ENCODE measurements at regions of chr16 and their contacts with region 1.

Region 1: GRCh38 chr16:30984669-30985400 is at the start of gene HSD3B7:
- DNase-seq: peak; percentile 24
- H3K4me3 ChIP-seq: peak within 1 kb of the TSS; percentile 31 to 68 (median 56)
- H3K27ac ChIP-seq: peak within 1 kb of the TSS; percentile 62 to 83 (median 78)
- H3K4me1 ChIP-seq: peaks cover 7 to 23% (median 8%) of the 10 kb centered on the region in 3 donors
- H3K27me3 ChIP-seq: no peaks in the 10 kb centered on the region
- CTCF ChIP-seq: peak; percentile 92 to 97 (median 96)
- POLR2A ChIP-seq: no peak
- total RNA-seq, gene HSD3B7: 6.9 to 17.0 (median 8.8) TPM

Region 2: GRCh38 chr16:30775392-30776188 is 209.2 kb before region 1 on chr16:
- intact Hi-C with region 1: no loop called
- DNase-seq: no peak
- H3K4me3 ChIP-seq: peak overlapping the region; percentile 71 to 81 (median 76)
- H3K27ac ChIP-seq: peak overlapping the region; percentile 84 to 89 (median 84)
- H3K4me1 ChIP-seq: peaks cover 14 to 47% (median 23%) of the 10 kb centered on the region in 3 donors
- H3K27me3 ChIP-seq: no peaks in the 10 kb centered on the region
- CTCF ChIP-seq: no peak
- POLR2A ChIP-seq: peak in 1 of 4 donors; percentile 39

Region 3: GRCh38 chr16:30858829-30859423 is 125.9 kb before region 1 on chr16:
- intact Hi-C with region 1: no loop called
- DNase-seq: no peak
- H3K4me3 ChIP-seq: no peak overlapping the region
- H3K27ac ChIP-seq: no peak overlapping the region
- H3K4me1 ChIP-seq: peaks cover 0 to 8% (median 0%) of the 10 kb centered on the region in 3 donors
- H3K27me3 ChIP-seq: no peaks in the 10 kb centered on the region
- CTCF ChIP-seq: no peak
- POLR2A ChIP-seq: no peak

Region 4: DNA sequence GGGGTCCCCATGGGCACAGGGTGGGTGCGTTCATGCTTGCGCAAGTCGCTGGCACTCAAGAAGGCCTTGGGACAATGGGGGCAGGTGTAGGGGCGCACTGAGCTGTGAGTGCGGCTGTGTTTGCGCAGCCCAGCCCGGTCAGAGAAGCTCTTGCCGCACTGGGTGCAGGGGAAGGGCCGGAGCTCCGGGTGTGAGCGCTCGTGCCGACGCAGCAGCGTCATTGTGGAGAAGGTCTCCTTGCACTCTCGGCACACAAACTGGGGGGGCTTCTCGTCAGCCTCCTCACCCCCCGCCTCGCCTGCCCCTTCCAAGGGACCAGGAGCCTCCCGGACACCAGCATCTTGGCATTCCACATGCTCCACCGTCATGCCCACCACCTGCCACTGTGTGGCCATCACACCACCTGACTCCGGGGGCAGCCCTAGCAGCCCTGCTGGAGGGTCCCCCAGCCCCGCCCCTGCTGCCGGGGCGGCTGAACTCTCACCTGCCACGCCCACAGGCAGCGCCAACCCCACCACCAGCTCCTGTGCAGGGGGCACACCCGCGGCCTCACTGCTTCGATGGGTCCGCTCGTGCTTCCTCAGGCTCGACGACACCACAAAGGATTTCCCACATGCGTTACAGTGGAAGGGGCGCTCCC is 76.4 kb after region 1 on chr16:
- intact Hi-C with region 1: no loop called
- DNase-seq: no peak
- H3K4me3 ChIP-seq: no peak overlapping the region
- H3K27ac ChIP-seq: no peak overlapping the region
- H3K4me1 ChIP-seq: peaks cover 4 to 24% (median 13%) of the 10 kb centered on the region in 3 donors
- H3K27me3 ChIP-seq: no peaks in the 10 kb centered on the region
- CTCF ChIP-seq: no peak
- POLR2A ChIP-seq: no peak

Region 5: DNA sequence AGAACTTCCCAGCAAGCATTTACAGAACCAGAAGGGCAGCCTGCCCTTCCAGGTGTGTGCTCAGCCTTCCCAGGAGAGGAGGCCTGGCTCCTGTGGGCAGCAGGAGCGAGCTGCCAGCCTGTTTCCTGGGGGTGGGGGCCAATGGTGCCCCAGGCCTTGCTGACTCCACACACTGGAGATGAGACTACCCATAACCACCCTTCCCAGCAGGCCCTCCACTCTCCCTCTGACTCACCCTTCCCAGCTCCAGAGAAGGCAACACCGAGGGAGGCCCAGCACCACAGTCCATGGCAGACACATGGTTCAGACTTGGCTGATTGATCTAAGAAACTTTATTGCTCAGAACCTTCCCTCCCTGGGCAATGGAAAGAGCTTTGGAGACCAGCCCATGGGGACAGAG is 105.7 kb after region 1 on chr16:
- intact Hi-C with region 1: no loop called
- DNase-seq: no peak
- H3K4me3 ChIP-seq: no peak overlapping the region
- H3K27ac ChIP-seq: no peak overlapping the region
- H3K4me1 ChIP-seq: peaks cover 10 to 26% (median 11%) of the 10 kb centered on the region in 3 donors
- H3K27me3 ChIP-seq: no peaks in the 10 kb centered on the region
- CTCF ChIP-seq: no peak
- POLR2A ChIP-seq: no peak

Region 6: DNA sequence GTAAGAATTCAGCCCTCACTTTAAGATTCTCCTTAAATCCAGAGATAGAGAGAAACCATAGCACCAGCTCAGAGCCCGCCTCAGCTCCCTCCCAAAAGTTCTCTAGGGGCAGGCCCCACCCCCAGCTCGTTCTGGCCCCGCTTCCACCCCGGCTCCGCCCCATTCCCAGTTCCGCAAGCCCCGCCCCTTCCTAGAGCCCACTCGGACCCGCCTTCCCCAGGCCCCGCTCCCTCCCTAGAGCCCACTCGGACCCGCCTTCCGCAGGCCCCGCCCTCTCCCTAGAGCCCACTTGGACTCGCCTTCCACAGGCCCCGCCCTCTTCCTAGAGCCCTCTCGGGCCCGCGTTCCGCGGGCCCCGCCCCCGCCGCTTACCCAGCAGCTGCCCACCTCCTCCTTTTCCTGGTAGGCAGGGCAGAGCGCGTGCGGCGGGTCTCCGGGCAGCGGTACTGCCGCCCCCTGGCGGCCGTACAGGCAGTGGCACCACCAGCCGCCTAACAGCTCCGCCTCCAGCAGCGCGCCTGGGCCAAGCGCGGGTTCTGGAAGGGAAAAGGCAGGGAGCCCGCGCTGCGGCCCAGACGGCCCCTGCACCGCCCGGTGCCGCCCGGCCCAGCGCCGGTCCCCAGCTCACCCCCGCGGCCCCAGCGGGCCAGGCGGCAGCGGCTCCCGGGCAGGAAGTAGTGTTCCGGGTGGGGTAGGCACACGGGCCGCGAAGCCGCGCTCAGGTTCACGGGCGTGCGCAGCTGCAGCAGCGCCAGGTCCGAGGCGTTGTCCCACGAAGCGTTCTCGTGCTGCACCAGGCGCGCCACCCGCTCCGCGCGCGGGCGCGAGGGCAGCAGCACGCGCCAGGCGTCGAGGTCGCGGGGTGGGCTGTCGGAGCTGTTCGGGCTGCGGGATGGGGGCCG is 157.5 kb after region 1 on chr16:
- intact Hi-C with region 1: loop called (anchors 5 kb)
- DNase-seq: peak; percentile 98
- H3K4me3 ChIP-seq: peak overlapping the region; percentile 40 to 70 (median 50)
- H3K27ac ChIP-seq: peak overlapping the region; percentile 88 to 93 (median 89)
- H3K4me1 ChIP-seq: peaks cover 28 to 64% (median 33%) of the 10 kb centered on the region in 3 donors
- H3K27me3 ChIP-seq: peaks cover 0 to 12% (median 0%) of the 10 kb centered on the region in 4 donors
- CTCF ChIP-seq: peak; percentile 95 to 100 (median 100)
- POLR2A ChIP-seq: peak in 2 of 4 donors; percentile 15 to 19

Region 7: DNA sequence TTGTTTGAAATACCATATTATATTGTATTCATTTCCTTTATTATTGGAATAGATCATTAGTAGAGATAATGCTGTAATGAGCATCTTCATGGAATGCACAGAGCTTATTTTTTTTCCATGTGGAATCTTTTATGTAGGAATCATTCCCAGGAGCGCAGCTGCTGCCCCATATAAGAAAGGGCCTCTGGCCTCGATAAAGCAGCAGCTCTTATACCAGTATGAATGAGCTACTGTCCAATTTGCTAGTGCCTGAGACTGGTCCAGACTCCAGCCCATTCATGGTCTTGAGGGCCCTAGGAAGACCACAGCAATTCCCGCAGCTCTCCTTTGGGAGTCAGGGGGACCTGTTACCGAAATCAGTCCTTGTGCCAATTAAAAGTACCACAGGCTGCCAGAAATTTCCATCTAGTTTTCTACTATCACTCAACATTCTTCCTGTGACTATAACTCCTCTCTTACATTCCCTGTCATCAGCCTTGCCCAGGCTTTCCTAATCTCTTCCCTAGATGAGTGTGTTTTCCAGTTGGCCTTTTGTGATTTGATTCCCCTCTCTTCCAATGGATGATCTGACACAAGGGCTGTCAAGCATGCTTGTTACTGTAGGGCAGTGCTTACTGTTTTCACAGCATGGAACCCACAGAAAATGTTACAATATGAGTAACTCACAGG is 455.8 kb after region 1 on chr16:
- intact Hi-C with region 1: loop called (anchors 5 kb)
- DNase-seq: no peak
- H3K4me3 ChIP-seq: no peak overlapping the region
- H3K27ac ChIP-seq: no peak overlapping the region
- H3K4me1 ChIP-seq: peaks cover 0 to 23% (median 7%) of the 10 kb centered on the region in 3 donors
- H3K27me3 ChIP-seq: peaks cover 0 to 13% (median 0%) of the 10 kb centered on the region in 4 donors
- CTCF ChIP-seq: no peak
- POLR2A ChIP-seq: no peak